Psoas muscle (tissue), 8 donors: ENCODE measurements at regions of chr22 and their contacts with region 1.

Region 1: DNA sequence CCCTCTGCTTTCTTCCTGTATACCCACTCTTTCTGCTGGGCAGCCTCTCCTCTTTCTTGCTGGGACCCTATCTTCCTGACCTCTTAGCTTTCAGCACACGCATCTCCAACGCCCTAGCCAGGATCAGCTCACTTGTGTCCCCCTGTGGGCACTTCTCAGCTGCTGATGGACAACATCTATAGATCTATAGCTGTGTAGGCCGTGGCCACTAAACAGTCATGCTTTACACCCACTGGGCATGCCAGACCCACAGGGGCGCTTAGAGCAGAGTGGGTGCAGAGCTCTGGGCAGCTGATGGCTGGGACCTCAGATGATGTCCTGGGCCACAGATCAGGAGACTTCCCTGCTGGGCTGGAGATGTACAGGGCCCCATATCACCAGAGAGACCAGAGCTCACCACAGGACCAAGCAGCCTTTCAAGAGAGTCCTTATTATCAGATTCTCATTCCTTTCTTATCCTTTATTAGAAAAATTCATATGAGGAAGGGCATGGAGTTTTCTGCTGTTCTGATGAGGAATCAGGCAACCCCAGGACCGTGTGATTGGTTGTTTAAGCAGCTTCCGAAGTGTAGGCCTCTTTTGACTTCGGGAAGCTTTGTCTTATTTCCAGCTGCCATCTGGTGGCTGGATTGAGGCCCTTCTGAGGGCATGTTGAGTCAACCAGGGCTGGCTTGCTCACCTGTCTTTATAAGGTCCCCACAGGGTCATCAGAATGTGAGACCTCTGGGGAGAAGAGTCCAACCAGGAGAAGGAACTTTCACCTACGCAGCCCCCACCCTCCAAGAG is 60.5 kb downstream of the OSBP2 start:
- DNase-seq: peak in 1 of 2 donors; percentile 58
- ATAC-seq: peak; percentile 86 to 97 (median 93)
- H3K4me3 ChIP-seq: no peak overlapping the region
- H3K27ac ChIP-seq: no peak overlapping the region
- H3K4me1 ChIP-seq: no peaks in the 10 kb centered on the region
- H3K27me3 ChIP-seq: no peaks in the 10 kb centered on the region
- CTCF ChIP-seq: peak; percentile 71

Region 2: DNA sequence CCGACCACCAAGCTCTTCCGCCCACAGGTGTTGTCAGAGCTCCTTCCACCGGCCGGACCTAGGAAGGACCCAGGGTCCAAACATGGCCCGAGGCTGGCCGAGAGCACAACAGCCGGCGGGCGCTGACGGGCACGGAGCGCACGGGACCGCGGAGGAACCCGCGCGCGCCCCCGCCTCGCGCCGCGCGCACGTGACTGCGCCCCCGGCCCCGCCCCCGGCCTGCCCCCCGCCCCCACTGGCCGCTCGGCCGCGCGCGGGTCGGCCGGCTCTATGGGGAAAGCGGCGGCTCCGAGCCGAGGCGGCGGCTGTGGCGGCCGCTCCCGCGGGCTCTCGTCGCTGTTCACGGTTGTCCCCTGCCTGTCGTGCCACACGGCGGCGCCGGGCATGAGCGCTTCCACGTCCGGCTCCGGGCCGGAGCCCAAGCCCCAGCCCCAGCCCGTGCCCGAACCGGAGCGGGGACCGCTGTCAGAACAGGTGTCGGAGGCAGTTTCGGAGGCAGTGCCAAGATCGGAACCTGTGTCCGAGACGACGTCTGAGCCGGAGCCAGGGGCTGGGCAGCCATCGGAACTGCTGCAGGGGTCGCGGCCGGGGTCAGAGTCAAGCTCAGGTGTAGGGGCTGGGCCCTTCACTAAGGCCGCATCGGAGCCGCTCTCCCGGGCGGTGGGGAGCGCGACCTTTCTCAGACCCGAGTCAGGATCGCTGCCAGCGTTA is 60.4 kb before region 1 on chr22 and contains the start of gene OSBP2:
- intact Hi-C with region 1: loop called in 1 of 2 experiments (anchors 2 kb)
- DNase-seq: peak; percentile 44 to 64
- ATAC-seq: peak; percentile 72 to 81 (median 78)
- H3K4me3 ChIP-seq: peak within 1 kb of the TSS; percentile 74
- H3K27ac ChIP-seq: peak within 1 kb of the TSS; percentile 76
- H3K4me1 ChIP-seq: peaks cover 7% of the 10 kb centered on the region
- H3K27me3 ChIP-seq: peaks cover 0 to 7% (median 0%) of the 10 kb centered on the region in 3 donors
- CTCF ChIP-seq: peak; percentile 13
- total RNA-seq, gene OSBP2: 2.5 to 8.2 (median 3.3) TPM

Region 3: GRCh38 chr22:30717331-30717921 is 37.7 kb before region 1 on chr22:
- intact Hi-C with region 1: no loop called
- DNase-seq: no peak
- ATAC-seq: peak in 1 of 4 donors; percentile 27
- H3K4me3 ChIP-seq: no peak overlapping the region
- H3K27ac ChIP-seq: no peak overlapping the region
- H3K4me1 ChIP-seq: peaks cover 7% of the 10 kb centered on the region
- H3K27me3 ChIP-seq: no peaks in the 10 kb centered on the region
- CTCF ChIP-seq: no peak